GM12878 (cell line): ENCODE measurements at regions of chr2 and their contacts with region 1.

Region 1: DNA sequence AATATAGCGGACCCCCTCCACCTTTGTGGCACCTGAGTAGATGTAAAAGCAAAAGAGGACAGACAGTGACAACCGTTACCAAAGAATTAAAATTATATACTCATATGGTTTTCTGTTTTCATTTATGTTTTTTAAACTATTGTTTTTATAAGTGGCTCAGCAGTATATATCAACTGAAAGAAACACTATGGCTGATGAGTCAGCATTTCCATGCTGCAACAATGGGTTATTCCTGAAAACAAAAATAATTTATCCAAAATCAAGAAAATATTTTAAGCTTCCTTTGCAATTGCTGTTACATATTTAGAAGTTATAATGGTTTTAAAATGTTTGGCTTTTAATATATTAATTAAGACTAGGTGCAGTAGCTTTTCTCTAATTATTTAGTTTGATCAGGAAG is 17.7 kb downstream of the MRPS9 start:
- DNase-seq: no peak
- ATAC-seq: no peak
- H3K4me3 ChIP-seq: no peak overlapping the region
- H3K27ac ChIP-seq: no peak overlapping the region
- H3K4me1 ChIP-seq: no peaks in the 10 kb centered on the region
- H3K27me3 ChIP-seq: no peaks in the 10 kb centered on the region
- CTCF ChIP-seq: no peak
- EP300 ChIP-seq: no peak
- POLR2A ChIP-seq: no peak
- RAD21 ChIP-seq: no peak

Region 2: DNA sequence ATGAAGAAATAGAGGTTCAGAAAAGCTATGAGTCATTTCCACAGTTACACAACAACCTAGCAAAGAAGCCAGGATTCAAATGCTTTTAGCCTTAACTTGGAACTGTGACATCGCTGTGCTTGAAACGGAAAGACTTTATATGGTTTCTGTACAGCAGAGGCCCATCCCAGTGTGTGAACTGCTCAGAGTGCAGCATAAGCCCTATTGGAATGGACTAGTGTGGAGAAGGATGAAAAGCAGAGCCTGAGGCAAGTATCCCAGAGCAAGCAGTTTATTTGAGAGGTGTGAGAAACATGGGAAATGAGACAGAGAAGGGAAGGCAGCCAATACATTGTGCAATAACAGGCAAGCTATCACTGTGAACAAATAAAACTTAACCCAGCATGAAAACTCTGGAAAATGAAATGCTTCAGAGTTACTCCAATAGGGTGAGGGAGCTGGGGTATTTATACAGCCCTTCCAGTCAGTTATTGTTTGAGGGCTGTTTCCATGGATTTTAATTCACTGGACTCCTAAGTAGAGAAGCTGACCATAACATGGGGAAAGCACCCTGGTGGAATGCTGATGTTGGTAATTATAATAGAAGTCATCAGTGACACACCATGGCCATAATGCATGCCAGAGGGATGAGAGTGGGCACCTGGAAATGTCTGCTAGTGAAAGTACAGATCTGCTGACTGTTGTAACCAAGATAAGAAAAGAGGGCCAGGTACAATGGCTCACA is 455.7 kb before region 1 on chr2:
- CTCF ChIA-PET with region 1: no interaction called
- POLR2A ChIA-PET with region 1: no interaction called
- RAD21 ChIA-PET with region 1: no interaction called
- SMC1A ChIA-PET with region 1: no interaction called
- in situ Hi-C with region 1: no loop called
- intact Hi-C with region 1: no loop called
- DNase-seq: no peak
- ATAC-seq: no peak
- H3K4me3 ChIP-seq: no peak overlapping the region
- H3K27ac ChIP-seq: no peak overlapping the region
- H3K4me1 ChIP-seq: no peaks in the 10 kb centered on the region
- H3K27me3 ChIP-seq: no peaks in the 10 kb centered on the region
- CTCF ChIP-seq: no peak
- EP300 ChIP-seq: no peak
- POLR2A ChIP-seq: no peak
- RAD21 ChIP-seq: no peak

Region 3: DNA sequence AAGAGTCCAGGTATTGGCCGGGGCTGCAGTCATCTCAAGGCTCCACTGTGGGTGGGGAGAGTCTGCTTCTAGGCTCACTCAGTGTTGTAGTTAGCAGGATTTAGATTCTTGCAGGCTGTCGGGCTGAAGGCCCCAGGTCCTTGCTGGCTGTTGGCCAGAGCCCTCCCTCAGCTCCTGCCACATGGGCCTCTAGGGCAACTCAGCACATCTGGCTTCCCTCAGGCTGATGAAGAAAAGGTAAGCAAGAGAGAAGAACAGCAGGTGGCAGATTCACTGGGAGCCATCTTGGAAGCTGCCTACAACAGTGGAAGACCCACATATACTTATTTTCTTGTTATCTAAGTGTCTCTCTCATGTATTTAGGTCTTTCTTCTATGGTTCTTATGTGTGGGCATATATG is 13.4 kb before region 1 on chr2:
- CTCF ChIA-PET with region 1: interaction called, 6 read pairs
- POLR2A ChIA-PET with region 1: interaction called, 8 read pairs
- RAD21 ChIA-PET with region 1: interaction called, 6 read pairs
- SMC1A ChIA-PET with region 1: interaction called, 35 read pairs
- in situ Hi-C with region 1: no loop called
- intact Hi-C with region 1: no loop called
- DNase-seq: no peak
- ATAC-seq: no peak
- H3K4me3 ChIP-seq: no peak overlapping the region
- H3K27ac ChIP-seq: no peak overlapping the region
- H3K4me1 ChIP-seq: 0 out of 2 replicates have a peak, but pooled peaks cover 3% of the 10 kb centered on the region
- H3K27me3 ChIP-seq: no peaks in the 10 kb centered on the region
- CTCF ChIP-seq: no peak
- EP300 ChIP-seq: no peak
- POLR2A ChIP-seq: no peak
- RAD21 ChIP-seq: no peak